Activated CD4-positive, alpha-beta T cell treated with anti-CD3 and anti-CD28 coated beads for 36 hours (primary cell): ENCODE measurements at regions of chr6 and their contacts with region 1.

Region 1: DNA sequence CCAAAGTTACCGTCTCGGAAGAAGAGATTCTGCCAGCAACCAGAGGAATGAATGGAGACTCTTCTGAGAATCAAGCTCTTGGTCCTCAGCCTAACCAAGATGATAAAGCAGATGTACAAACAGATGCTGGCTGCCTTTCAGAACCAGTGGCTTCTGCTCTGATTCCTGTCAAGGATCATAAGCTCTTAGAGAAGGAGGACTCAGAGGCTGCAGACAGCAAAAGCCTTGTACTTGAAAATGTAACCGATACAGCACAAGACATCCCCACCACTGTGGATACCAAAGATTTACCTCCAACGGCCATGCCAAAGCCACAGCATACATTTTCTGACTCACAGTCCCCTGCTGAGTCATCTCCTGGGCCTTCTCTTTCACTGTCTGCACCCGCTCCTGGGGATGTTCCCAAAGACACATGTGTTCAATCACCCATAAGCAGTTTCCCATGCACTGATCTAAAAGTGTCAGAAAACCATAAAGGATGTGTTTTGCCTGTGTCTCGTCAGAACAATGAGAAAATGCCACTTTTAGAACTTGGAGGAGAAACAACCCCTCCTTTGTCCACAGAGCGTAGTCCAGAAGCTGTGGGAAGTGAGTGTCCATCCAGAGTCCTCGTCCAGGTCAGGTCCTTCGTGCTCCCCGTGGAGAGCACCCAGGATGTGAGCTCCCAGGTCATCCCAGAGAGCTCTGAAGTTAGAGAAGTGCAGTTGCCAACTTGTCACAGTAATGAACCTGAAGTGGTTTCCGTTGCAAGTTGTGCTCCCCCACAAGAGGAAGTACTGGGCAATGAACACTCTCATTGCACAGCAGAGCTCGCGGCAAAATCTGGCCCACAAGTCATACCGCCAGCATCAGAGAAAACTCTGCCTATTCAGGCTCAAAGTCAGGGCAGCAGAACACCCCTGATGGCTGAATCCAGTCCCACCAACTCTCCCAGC is 109.6 kb downstream of the RTN4IP1 start:
- DNase-seq: peak; percentile 89
- ATAC-seq: peak; percentile 66
- H3K4me3 Mint-ChIP-seq: peak overlapping the region; percentile 88
- H3K27ac Mint-ChIP-seq: peak overlapping the region; percentile 99
- H3K4me1 Mint-ChIP-seq: peaks cover 71% of the 10 kb centered on the region
- H3K27me3 Mint-ChIP-seq: no peaks in the 10 kb centered on the region

Region 2: DNA sequence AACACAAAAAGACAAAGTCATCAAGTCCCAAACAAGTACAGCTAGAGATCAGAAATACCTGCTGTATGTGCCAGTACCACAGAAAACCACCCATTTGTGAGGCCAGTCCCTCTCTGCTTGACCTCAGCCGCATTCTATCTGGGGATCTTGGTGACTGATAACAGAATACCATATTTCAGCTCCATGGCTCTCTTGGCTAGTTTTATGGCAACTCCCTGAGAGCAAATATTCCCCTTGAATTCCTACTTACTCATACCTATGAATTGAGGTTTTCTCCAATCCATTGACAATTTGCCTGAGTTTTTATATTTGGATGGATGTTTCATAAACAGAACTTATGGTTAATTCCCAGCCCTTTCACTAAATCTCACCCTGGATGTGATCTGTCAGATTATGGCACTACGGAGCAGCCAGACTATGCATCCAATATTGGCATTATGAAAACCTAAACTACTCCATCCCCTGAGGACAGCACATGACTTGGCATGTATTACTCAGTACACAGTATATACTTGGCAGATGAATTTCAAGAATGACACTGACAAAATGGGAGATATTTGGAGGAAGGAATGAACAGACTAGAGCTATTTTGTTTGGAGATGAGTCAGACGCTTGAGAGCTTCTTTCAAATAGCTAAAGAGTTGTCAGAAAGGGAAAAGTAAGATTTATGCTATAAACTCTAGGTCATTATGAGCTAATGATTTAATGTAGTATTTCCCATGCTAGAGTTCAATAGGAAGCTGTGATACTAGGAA is 337.9 kb before region 1 on chr6:
- CTCF ChIA-PET with region 1: no interaction called
- POLR2A ChIA-PET with region 1: no interaction called
- intact Hi-C with region 1: loop called in 1 of 2 experiments (anchors 5 kb)
- DNase-seq: no peak
- ATAC-seq: peak; percentile 64
- H3K4me3 Mint-ChIP-seq: no peak overlapping the region
- H3K27ac Mint-ChIP-seq: peak overlapping the region; percentile 44
- H3K4me1 Mint-ChIP-seq: peaks cover 48% of the 10 kb centered on the region
- H3K27me3 Mint-ChIP-seq: peaks cover 4% of the 10 kb centered on the region

Region 3: DNA sequence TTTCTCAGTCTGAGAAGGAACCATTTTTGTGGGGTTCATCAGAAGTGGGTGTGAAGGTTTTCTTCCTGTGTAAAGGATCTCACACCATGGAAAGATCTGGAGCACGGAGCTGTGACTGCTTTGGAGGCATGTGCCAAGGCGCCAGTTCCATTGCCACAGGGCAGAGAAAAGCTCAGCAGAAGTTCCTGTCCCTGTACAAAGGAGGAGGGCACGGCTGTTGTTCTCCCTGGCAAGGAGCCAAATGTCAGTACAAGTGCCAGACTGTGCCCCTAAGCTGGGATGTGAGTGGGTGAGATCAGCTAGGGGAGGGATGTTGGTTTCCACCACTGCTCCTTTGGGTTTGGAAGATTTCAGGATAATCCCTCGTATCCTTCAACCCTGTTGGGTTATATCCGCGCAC is 41.9 kb before region 1 on chr6:
- CTCF ChIA-PET with region 1: interaction called, 4 read pairs
- POLR2A ChIA-PET with region 1: interaction called, 3 read pairs
- intact Hi-C with region 1: loop called (anchors 2 kb)
- DNase-seq: no peak
- ATAC-seq: no peak
- H3K4me3 Mint-ChIP-seq: no peak overlapping the region
- H3K27ac Mint-ChIP-seq: no peak overlapping the region
- H3K4me1 Mint-ChIP-seq: peaks cover 9% of the 10 kb centered on the region
- H3K27me3 Mint-ChIP-seq: no peaks in the 10 kb centered on the region

Region 4: GRCh38 chr6:106556368-106556960 is 36.7 kb after region 1 on chr6:
- CTCF ChIA-PET with region 1: interaction called, 12 read pairs
- POLR2A ChIA-PET with region 1: interaction called, 6 read pairs
- intact Hi-C with region 1: loop called (anchors 1 kb)
- DNase-seq: no peak
- ATAC-seq: no peak
- H3K4me3 Mint-ChIP-seq: no peak overlapping the region
- H3K27ac Mint-ChIP-seq: peak overlapping the region; percentile 13
- H3K4me1 Mint-ChIP-seq: peaks cover 31% of the 10 kb centered on the region
- H3K27me3 Mint-ChIP-seq: no peaks in the 10 kb centered on the region

Region 5: DNA sequence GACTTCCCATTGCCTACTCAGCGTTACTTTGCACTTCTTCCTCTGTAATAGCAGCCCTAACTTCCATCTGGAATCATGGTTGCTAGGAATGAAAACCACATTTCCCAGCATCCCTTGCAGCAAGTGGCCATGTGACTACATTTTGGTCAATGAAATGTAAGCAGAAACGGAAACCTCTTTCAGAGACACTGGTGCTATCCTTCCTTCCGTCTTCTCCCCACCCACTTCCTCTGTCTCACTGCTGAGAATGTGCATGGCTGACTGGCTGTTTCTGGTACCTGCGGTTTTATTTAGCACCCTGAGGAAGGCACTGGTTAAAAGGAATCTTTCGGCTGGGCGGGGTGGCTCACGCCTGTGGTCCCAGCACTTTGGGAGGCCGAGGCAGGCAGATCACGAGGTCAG is 1197.0 kb after region 1 on chr6:
- CTCF ChIA-PET with region 1: no interaction called
- POLR2A ChIA-PET with region 1: no interaction called
- intact Hi-C with region 1: loop called (anchors 1 to 10 kb)
- DNase-seq: peak; percentile 84
- ATAC-seq: peak; percentile 62
- H3K4me3 Mint-ChIP-seq: peak overlapping the region; percentile 53
- H3K27ac Mint-ChIP-seq: peak overlapping the region; percentile 90
- H3K4me1 Mint-ChIP-seq: peaks cover 72% of the 10 kb centered on the region
- H3K27me3 Mint-ChIP-seq: no peaks in the 10 kb centered on the region